K562 (cell line): ENCODE measurements at regions of chr6 and their contacts with region 1.

Region 1: GRCh38 chr6:36027501-36028087 is at the start of gene MAPK14:
- DNase-seq: peak; percentile 97 to 100 (median 98)
- ATAC-seq: peak; percentile 91
- H3K4me3 ChIP-seq: peak within 1 kb of the TSS; percentile 92
- H3K27ac ChIP-seq: peak within 1 kb of the TSS; percentile 73
- H3K4me1 ChIP-seq: peaks cover 26 to 39% of the 10 kb centered on the region in 2 experiments
- H3K27me3 ChIP-seq: no peaks in the 10 kb centered on the region
- CTCF ChIP-seq: peak; percentile 95 to 98 (median 97)
- EP300 ChIP-seq: no peak
- POLR2A ChIP-seq: peak; percentile 96
- RAD21 ChIP-seq: peak; percentile 97 to 99
- polyA plus RNA-seq, gene MAPK14: 8.8 to 11.8 TPM

Region 2: DNA sequence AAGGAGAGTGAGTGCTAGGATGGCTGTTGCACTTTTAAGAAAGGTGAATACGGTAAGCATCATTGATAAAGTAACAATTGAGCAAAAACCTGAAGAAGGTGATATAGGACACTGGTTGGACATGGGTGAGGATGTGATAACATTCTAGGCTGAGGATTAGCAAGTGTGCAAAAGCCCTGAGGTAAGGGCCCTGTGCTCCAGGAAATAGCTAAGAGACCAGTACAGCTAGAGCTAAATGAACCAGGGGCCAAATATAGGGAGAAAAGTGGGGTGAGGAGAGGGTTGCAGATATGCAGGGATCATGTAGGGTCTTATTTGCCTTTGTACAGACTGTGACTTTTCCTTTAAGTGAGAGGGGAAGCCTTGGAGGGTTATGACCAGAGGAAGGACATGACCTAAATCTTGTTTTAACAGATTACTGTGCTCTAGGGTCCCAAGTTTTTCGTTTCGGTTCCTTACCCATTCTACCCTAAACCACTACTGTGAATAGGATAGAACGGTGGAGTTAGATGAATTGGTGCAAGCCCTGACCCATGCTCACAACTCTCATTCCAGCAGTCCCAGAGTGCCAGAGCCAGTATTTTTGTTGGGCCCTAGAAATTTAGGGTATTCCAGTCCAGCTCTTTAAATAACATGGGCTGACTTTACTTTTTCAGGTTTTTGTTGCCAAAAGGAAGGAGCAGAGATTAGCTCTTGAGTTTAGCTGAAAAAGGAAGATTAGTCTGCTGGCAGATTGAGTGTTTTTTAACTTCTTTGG is 10.7 kb after region 1 on chr6:
- CTCF ChIA-PET with region 1: no interaction called
- POLR2A ChIA-PET with region 1: interaction called, 37 read pairs
- in situ Hi-C with region 1: no loop called
- intact Hi-C with region 1: no loop called
- DNase-seq: no peak
- ATAC-seq: peak; percentile 59
- H3K4me3 ChIP-seq: no peak overlapping the region
- H3K27ac ChIP-seq: no peak overlapping the region
- H3K4me1 ChIP-seq: peaks cover 3 to 12% of the 10 kb centered on the region in 2 experiments; a peak in 3 of 5 replicates
- H3K27me3 ChIP-seq: no peaks in the 10 kb centered on the region
- CTCF ChIP-seq: no peak
- EP300 ChIP-seq: no peak
- POLR2A ChIP-seq: no peak
- RAD21 ChIP-seq: no peak

Region 3: DNA sequence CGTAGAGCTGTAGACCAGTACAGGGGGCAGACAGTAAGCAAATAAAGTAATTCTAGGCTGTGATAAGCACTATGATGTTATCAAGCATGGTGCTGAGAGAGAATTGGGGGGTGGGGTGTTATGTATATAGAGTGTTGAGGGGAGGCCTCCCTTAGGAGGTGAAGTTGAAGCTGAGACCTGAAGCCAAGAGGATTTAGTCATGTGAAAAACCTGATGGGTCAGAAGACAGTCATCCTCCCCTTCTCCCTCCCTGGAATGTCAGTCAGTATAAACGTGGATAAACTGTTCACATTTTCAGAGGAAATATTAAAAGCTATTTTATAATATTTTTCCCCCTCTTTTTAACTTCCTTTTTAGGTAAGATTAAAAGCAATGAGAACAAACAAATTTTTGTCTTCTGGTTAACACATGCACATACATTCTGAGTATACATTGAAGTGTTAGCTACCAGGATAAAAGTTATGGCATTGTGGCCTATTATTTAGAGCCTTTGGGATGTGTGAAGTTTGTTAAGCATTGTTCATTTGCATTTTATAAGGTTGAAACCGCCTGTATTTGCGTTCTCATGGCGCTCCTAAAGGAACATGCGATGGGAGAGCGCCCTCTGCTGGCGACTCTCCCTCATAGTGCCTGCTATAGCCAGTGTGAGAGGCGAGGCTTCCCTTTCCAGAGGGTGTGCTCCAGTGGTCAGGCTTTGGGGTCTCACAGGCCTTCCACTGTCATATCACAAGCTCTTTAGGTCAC is 67.3 kb after region 1 on chr6:
- CTCF ChIA-PET with region 1: interaction called, 18 read pairs
- POLR2A ChIA-PET with region 1: interaction called, 6 read pairs
- in situ Hi-C with region 1: loop called (anchors 5 kb)
- intact Hi-C with region 1: loop called (anchors 1 kb)
- DNase-seq: peak; percentile 83 to 94 (median 84)
- ATAC-seq: peak; percentile 92
- H3K4me3 ChIP-seq: no peak overlapping the region
- H3K27ac ChIP-seq: peak overlapping the region; percentile 52
- H3K4me1 ChIP-seq: peaks cover 6 to 27% of the 10 kb centered on the region in 2 experiments
- H3K27me3 ChIP-seq: no peaks in the 10 kb centered on the region
- CTCF ChIP-seq: peak; percentile 91 to 98 (median 95)
- EP300 ChIP-seq: no peak; the same call in 1 of the 2 replicates
- POLR2A ChIP-seq: no peak
- RAD21 ChIP-seq: peak; percentile 97

Region 4: DNA sequence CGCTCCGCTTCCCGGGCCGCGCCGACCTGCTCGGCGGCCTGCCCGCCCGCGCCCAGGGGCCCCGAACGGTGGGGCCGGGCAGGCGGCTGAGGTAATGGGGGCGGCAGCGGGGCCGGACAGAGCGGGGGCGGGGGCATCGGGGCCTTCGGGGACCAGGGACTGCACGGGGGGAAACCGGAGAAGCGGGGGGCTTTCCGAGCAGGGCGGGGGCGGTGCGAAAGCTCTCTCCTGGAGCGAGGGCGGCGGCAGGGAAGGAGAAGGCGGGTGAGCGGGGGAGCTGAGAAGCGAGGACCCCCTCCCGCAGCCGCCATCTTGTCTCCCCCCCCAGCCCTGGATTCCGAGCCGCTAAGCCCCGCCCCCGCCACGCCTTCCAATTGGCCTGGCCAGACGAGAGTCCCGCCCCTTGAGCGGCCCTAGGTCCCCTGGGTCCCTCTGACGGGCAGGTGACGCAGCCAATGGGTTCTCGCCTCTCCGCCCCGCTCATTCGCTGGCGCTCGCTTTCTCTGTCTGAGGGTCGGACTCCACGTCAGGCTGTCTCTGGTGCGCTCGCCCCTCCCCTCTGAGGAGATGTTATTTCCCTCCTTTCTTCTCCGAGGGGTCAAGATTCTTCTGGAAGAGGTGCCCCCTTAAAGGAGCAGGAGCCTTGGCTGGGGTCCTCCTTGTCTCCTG is 169.4 kb after region 1 on chr6:
- CTCF ChIA-PET with region 1: no interaction called
- POLR2A ChIA-PET with region 1: interaction called, 3 read pairs
- in situ Hi-C with region 1: no loop called
- intact Hi-C with region 1: loop called (anchors 1 kb)
- DNase-seq: peak; percentile 100
- ATAC-seq: peak; percentile 98
- H3K4me3 ChIP-seq: peak overlapping the region; percentile 72
- H3K27ac ChIP-seq: peak overlapping the region; percentile 87
- H3K4me1 ChIP-seq: peaks cover 8 to 12% of the 10 kb centered on the region in 2 experiments; a peak in 3 of 5 replicates
- H3K27me3 ChIP-seq: no peaks in the 10 kb centered on the region
- CTCF ChIP-seq: no peak
- EP300 ChIP-seq: no peak
- POLR2A ChIP-seq: peak; percentile 83
- RAD21 ChIP-seq: no peak

Region 5: DNA sequence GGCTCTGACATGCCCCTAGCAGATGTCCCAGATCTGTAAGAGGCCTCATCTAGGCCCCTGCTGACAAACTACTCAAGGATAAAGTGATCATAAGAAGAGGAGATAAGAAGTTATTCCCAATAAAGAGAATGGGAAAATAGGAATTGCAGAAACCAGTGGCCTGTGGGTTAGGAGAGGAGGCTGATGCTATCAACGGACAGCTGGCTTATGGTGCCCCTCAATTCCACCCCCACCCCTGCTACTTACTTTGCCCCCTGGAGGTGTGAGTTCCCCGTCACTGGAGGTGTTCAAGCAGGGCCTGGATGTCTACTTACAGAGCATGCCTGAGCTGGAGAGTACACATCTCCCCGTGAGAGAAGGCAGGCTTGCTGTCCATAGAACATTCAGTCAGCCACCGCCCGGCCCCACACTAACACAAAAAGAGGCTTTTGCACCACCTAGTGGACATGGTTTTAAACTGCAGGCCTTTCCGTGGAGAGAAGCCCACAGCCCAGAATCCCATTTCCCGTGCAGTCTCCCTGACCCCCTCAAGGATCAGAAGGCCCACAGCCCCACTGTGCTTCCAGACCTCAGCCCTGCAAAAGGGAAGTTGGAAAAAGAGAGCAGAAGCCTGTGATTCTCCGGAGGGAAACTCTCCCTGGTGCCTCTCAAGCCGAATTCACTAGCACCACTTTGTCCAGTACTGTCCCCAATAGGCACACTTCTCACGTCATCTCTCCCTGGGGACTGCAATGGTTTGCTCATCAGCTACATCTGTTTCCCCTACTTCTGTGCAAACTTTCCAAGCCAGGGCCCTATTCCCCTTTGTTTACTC is 332.9 kb after region 1 on chr6:
- CTCF ChIA-PET with region 1: interaction called, 3 read pairs
- POLR2A ChIA-PET with region 1: no interaction called
- in situ Hi-C with region 1: no loop called
- intact Hi-C with region 1: loop called (anchors 1 kb)
- DNase-seq: peak; percentile 85 to 89 (median 88)
- ATAC-seq: peak; percentile 96
- H3K4me3 ChIP-seq: no peak overlapping the region
- H3K27ac ChIP-seq: no peak overlapping the region
- H3K4me1 ChIP-seq: peaks cover 9 to 20% of the 10 kb centered on the region in 2 experiments; a peak in 4 of 5 replicates
- H3K27me3 ChIP-seq: peaks cover 0 to 4% of the 10 kb centered on the region in 2 experiments; a peak in 2 of 5 replicates
- CTCF ChIP-seq: peak; percentile 94 to 97 (median 95)
- EP300 ChIP-seq: no peak
- POLR2A ChIP-seq: no peak
- RAD21 ChIP-seq: peak; percentile 93 to 97